HepG2 (cell line): ENCODE measurements at regions of chr5 and their contacts with region 1.

Region 1: GRCh38 chr5:149035372-149035790 is 27.5 kb downstream of the SH3TC2 start:
- DNase-seq: peak; percentile 53
- ATAC-seq: peak; percentile 96
- H3K4me3 ChIP-seq: no peak overlapping the region
- H3K27ac ChIP-seq: no peak overlapping the region
- H3K4me1 ChIP-seq: no peaks in the 10 kb centered on the region
- H3K27me3 ChIP-seq: no peaks in the 10 kb centered on the region
- CTCF ChIP-seq: peak; percentile 90
- EP300 ChIP-seq: no peak
- POLR2A ChIP-seq: no peak
- RAD21 ChIP-seq: no peak

Region 2: DNA sequence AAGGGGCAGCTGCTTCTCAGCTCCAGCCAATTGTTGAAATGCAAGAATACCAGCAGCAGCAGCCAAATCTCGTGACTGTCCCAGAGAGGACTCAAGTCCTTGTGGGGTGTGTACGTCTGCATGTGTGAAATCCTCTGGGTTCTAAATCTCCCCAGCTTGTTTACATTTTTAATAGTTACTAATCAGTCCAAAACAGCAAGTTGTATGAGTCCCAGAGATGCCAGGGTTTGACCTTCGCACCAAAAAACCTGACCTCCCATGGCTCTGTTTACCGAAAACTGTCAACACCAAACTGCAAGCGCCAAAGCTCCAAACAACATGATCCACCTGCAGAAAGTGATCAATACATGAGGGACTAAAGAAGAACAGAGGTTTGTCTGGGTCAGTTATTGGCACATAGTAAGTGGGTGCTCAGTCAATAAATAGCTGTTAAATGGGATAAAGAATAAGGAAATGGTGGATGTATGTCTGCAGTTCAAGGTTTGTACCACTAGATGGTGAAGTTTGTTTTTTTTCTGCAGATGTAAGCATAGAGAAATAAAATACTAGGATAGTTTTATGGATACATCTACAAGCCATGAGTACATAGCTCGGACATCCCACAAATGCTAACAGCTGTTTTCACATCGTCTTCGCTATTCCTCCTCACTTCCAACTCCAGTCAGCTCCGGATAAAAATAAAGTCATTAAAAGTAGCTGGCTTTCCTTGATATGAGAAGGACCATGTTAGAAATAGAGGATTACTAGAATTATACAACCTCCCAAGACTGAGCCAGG is 294.2 kb before region 1 on chr5:
- CTCF ChIA-PET with region 1: interaction called, 6 read pairs
- POLR2A ChIA-PET with region 1: no interaction called
- in situ Hi-C with region 1: loop called (anchors 5 kb)
- intact Hi-C with region 1: loop called (anchors 1 kb)
- DNase-seq: peak; percentile 42
- ATAC-seq: peak; percentile 48
- H3K4me3 ChIP-seq: no peak overlapping the region; a peak in 1 of 6 replicates
- H3K27ac ChIP-seq: no peak overlapping the region
- H3K4me1 ChIP-seq: peaks cover 22% of the 10 kb centered on the region
- H3K27me3 ChIP-seq: no peaks in the 10 kb centered on the region
- CTCF ChIP-seq: peak; percentile 51
- EP300 ChIP-seq: no peak
- POLR2A ChIP-seq: no peak
- RAD21 ChIP-seq: no peak

Region 3: DNA sequence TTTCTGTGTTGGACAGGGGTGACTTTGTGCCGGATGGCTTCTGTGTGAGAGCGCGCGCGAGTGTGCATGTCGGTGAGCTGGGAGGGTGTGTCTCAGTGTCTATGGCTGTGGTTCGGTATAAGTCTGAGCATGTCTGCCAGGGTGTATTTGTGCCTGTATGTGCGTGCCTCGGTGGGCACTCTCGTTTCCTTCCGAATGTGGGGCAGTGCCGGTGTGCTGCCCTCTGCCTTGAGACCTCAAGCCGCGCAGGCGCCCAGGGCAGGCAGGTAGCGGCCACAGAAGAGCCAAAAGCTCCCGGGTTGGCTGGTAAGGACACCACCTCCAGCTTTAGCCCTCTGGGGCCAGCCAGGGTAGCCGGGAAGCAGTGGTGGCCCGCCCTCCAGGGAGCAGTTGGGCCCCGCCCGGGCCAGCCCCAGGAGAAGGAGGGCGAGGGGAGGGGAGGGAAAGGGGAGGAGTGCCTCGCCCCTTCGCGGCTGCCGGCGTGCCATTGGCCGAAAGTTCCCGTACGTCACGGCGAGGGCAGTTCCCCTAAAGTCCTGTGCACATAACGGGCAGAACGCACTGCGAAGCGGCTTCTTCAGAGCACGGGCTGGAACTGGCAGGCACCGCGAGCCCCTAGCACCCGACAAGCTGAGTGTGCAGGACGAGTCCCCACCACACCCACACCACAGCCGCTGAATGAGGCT is 209.2 kb before region 1 on chr5 and contains the start of gene ADRB2:
- CTCF ChIA-PET with region 1: interaction called, 9 read pairs
- POLR2A ChIA-PET with region 1: no interaction called
- in situ Hi-C with region 1: loop called (anchors 10 kb)
- intact Hi-C with region 1: loop called (anchors 1 kb)
- DNase-seq: peak; percentile 55
- ATAC-seq: peak; percentile 97
- H3K4me3 ChIP-seq: peak within 1 kb of the TSS; percentile 37 to 63 (median 54); a peak in 5 of 6 replicates
- H3K27ac ChIP-seq: no peak within 1 kb of the TSS
- H3K4me1 ChIP-seq: peaks cover 8% of the 10 kb centered on the region
- H3K27me3 ChIP-seq: peaks cover 2 to 7% of the 10 kb centered on the region in 2 experiments; a peak in 4 of 5 replicates
- CTCF ChIP-seq: no peak
- EP300 ChIP-seq: no peak
- POLR2A ChIP-seq: no peak
- RAD21 ChIP-seq: no peak
- total RNA-seq, gene ADRB2: not detected in 2 replicates

Region 4: DNA sequence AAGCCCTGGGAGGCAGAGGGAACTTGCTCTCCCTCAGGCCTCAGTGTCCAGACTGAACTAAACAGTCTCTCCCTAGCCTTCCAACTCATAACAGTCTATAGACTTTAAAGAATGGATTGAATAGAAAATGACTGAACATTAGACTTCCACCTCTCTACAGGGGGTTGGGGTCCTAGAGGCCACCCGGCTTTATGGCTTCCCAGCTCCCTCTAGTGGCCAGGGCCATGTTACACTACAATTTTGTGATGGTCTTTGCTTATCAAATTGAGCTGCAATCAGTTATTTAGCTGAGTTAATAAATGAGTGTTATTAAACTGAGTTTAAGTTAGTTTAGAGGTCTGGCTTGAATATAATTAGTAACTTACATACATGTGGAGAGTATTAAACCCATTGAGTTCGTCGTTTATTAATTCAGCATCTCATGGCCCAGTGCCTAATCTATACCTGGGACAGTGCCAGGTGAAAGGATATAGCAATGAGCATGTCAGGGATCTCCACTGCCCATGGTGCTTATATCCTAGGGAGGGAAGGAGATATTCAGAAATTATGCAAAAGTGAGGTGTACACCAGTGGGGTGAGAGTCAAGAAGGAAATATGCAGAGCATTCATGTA is 77.7 kb before region 1 on chr5:
- CTCF ChIA-PET with region 1: no interaction called
- POLR2A ChIA-PET with region 1: no interaction called
- in situ Hi-C with region 1: no loop called
- intact Hi-C with region 1: loop called (anchors 2 kb)
- DNase-seq: peak; percentile 14
- ATAC-seq: peak; percentile 82
- H3K4me3 ChIP-seq: no peak overlapping the region
- H3K27ac ChIP-seq: no peak overlapping the region
- H3K4me1 ChIP-seq: no peaks in the 10 kb centered on the region
- H3K27me3 ChIP-seq: 0 out of 5 replicates have a peak, but pooled peaks cover 0 to 5% of the 10 kb centered on the region in 2 experiments
- CTCF ChIP-seq: peak; percentile 72
- EP300 ChIP-seq: no peak
- POLR2A ChIP-seq: no peak
- RAD21 ChIP-seq: no peak

Region 5: GRCh38 chr5:149114403-149115312 is 79.3 kb after region 1 on chr5:
- CTCF ChIA-PET with region 1: no interaction called
- POLR2A ChIA-PET with region 1: no interaction called
- in situ Hi-C with region 1: no loop called
- intact Hi-C with region 1: loop called (anchors 1 kb)
- DNase-seq: peak; percentile 66
- ATAC-seq: peak; percentile 98
- H3K4me3 ChIP-seq: no peak overlapping the region
- H3K27ac ChIP-seq: no peak overlapping the region
- H3K4me1 ChIP-seq: no peaks in the 10 kb centered on the region
- H3K27me3 ChIP-seq: no peaks in the 10 kb centered on the region; a peak in 1 of 5 replicates
- CTCF ChIP-seq: peak; percentile 88
- EP300 ChIP-seq: no peak
- POLR2A ChIP-seq: no peak
- RAD21 ChIP-seq: peak; percentile 60; the same call in 1 of the 2 replicates